K562 (cell line): ENCODE measurements at regions of chr2 and their contacts with region 1.

Region 1: DNA sequence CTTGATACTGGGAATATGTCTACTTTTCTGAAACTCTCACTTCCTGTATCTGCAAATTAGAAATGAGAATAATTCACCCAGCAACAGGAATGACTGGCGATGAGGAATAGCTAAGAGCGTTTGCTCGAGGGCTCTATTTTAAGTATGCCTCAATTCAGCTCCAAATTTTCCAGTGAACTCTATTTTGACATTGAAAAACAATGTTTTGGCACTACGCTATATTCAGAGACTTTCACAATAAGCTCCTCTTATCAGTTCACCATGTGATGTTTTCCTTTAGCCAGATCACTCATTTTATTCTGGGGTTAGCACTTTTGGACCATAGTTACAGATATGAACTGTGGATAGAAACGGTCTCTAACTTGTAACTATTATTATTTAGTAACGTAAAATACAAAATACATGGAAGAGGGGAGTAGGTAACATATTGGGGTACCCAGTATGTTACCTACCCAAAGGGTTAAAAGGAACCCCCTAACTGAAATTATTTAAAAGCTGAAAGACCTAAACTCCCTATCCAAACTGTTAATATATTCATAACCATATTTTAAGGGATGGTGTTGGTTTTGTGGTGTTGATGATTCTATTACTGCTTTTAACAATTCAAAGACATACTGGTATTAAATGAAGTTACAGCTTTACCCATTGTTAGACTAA is 28.1 kb downstream of the SLC40A1 start:
- DNase-seq: no peak
- ATAC-seq: peak; percentile 35
- H3K4me3 ChIP-seq: no peak overlapping the region
- H3K27ac ChIP-seq: peak overlapping the region; percentile 46; the same call in 2 of the 3 replicates
- H3K4me1 ChIP-seq: peaks cover 0 to 18% of the 10 kb centered on the region in 2 experiments; a peak in 4 of 5 replicates
- H3K27me3 ChIP-seq: no peaks in the 10 kb centered on the region
- CTCF ChIP-seq: no peak
- EP300 ChIP-seq: no peak
- POLR2A ChIP-seq: no peak
- RAD21 ChIP-seq: no peak

Region 2: DNA sequence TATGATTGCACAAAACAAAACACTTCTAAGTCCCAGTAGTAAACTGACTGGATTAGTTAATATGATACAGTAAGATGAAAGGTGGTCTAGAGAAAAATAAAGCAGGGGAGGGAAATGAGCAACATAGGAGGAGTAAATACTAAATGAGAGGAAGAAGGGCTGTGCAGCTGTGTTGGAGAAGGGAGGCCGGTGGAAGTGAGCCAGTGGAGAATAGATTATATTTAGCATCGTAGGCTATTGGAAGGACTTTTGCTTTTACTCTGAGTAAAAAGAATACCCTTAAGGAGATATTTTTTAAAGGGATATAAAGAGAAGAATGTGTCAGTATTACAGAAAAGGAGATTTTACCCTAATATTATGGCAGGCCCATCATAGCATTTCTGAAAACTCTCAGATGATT is 98.5 kb before region 1 on chr2:
- CTCF ChIA-PET with region 1: no interaction called
- POLR2A ChIA-PET with region 1: no interaction called
- in situ Hi-C with region 1: no loop called
- intact Hi-C with region 1: no loop called
- DNase-seq: no peak
- ATAC-seq: no peak
- H3K4me3 ChIP-seq: no peak overlapping the region
- H3K27ac ChIP-seq: no peak overlapping the region
- H3K4me1 ChIP-seq: no peaks in the 10 kb centered on the region
- H3K27me3 ChIP-seq: no peaks in the 10 kb centered on the region
- CTCF ChIP-seq: no peak
- EP300 ChIP-seq: no peak
- POLR2A ChIP-seq: no peak
- RAD21 ChIP-seq: no peak

Region 3: DNA sequence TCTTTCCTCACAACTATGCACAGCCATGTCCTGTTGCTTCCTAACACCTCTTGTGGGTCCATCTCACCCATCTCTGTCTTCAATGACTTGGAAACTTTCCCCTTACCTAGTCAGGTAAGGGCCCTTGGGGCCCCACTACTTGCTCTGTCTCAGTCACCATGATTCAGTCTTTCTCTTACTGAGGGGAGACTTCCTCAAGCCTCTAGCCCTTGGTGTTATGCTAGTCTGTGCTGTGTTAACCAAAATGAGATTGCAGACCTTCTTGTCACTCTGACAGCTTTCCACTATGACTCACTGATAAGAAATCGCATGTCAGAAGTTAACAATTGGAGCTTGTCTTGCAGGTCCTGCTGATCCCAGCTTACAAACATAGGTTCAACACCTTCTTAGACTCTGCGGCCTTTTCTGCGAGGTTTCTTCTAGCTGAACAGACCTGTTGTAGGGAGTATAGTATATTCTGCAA is 45.9 kb before region 1 on chr2:
- CTCF ChIA-PET with region 1: no interaction called
- POLR2A ChIA-PET with region 1: interaction called, 3 read pairs
- in situ Hi-C with region 1: no loop called
- intact Hi-C with region 1: loop called (anchors 5 kb)
- DNase-seq: peak; percentile 57 to 87 (median 70)
- ATAC-seq: peak; percentile 98
- H3K4me3 ChIP-seq: no peak overlapping the region
- H3K27ac ChIP-seq: peak overlapping the region; percentile 93
- H3K4me1 ChIP-seq: peaks cover 12 to 25% of the 10 kb centered on the region in 2 experiments
- H3K27me3 ChIP-seq: no peaks in the 10 kb centered on the region
- CTCF ChIP-seq: no peak
- EP300 ChIP-seq: peak; percentile 91
- POLR2A ChIP-seq: no peak
- RAD21 ChIP-seq: 0 out of 4 replicates have a peak, but pooled peaks have one; percentile 4 to 24